AG04450 (cell line): ENCODE measurements at regions of chr1 and their contacts with region 1.

Region 1: GRCh38 chr1:217026531-217026930 is 303.3 kb upstream of the ESRRG start:
- DNase-seq: no peak
- H3K4me3 ChIP-seq: no peak overlapping the region
- H3K27ac ChIP-seq: no peak overlapping the region
- H3K27me3 ChIP-seq: no peaks in the 10 kb centered on the region
- CTCF ChIP-seq: no peak

Region 2: DNA sequence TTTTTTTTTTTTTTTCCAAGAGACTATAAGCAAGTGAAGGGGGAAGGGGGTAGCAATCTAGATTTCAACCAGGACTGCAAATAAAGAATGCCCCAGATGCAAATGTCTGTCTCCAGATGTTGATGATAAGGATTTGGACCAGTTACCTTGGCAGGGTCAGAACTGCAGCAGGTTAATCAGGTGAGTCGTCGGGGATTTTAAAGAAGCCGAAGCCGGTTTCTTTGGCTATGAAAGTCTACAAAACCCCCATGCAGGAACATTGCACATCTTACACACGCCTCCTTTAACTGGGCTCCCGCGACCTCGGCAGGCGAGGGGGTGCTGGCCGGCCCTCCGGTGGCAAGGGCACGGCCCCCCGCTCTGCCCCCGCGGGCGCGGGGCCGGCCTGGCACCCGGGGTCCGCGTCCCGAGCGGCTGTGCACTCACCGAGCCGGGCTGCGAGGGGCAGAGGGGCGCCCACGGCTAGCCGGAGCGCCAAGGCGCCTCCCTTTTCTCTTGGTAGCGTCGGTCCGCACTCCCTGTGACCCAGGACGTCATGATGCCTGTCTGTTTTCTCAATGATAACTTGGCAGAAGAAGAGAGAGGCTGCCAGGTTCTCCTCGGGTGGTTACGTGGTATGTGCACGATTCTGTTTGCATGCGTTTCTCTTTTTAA is 63.0 kb after region 1 on chr1:
- CTCF ChIA-PET with region 1: no interaction called
- POLR2A ChIA-PET with region 1: no interaction called
- DNase-seq: no peak
- H3K4me3 ChIP-seq: peak overlapping the region; percentile 57
- H3K27ac ChIP-seq: no peak overlapping the region
- H3K27me3 ChIP-seq: no peaks in the 10 kb centered on the region
- CTCF ChIP-seq: no peak

Region 3: DNA sequence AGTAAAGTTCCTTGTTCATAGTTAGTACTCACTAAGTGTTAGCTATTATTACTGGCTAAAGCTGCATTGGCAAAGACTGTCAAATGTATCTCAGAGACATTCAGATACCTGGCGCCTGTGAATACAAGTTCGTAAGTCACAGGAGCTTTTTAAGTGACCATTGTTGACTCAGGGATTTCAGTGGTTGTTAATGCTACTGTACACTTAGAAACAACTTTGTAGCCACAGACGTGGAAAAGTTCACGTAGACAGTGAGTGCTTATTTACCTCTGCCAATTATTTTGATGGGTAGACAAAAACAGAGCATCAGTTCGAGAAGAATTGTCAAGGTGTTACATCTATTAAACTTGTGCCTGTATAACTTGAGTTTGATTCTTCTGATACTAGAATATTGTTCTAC is 1199.5 kb after region 1 on chr1:
- CTCF ChIA-PET with region 1: interaction called, 10 read pairs
- POLR2A ChIA-PET with region 1: no interaction called
- DNase-seq: no peak
- H3K4me3 ChIP-seq: no peak overlapping the region
- H3K27ac ChIP-seq: no peak overlapping the region
- H3K27me3 ChIP-seq: no peaks in the 10 kb centered on the region
- CTCF ChIP-seq: no peak